Left colon (tissue), 2 donors: ENCODE measurements at regions of chr13 and their contacts with region 1.

Region 1: GRCh38 chr13:35978603-35979316 is 152.4 kb downstream of the DCLK1 start:
- DNase-seq: no peak
- ATAC-seq: no peak

Region 2: DNA sequence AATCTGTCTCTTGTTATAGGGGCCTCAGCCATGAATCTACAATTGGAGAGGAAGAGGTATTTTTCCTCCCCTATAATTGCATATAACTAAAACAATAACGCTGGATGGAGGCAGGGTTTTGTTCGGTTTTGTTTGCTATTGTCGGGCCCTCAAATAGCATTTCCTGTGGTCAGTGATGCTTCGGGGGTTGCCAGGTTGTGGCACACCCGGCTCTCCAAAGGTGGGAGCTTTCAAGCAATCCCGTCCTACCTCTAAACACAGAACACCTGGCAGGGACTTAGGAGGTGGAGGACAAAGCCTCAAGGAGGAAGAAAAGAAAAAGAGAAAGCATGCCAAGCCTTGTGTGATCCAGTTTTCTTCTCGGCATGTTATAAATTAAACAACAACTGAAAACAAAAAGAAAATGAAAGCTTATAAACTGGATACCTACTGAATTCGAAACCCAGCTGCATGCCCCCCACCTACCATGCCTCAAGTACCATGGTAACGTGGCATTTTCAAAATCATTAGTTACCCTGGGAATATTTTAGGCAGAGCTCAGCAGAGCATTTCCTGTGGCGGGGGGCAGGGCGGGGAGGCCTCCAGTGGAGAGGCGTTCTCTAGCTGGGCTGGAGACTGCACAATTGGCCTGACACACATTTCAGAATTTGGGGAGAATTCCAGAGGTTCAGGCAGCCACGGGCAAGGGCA is 61.4 kb before region 1 on chr13:
- intact Hi-C with region 1: no loop called
- DNase-seq: no peak
- ATAC-seq: no peak

Region 3: DNA sequence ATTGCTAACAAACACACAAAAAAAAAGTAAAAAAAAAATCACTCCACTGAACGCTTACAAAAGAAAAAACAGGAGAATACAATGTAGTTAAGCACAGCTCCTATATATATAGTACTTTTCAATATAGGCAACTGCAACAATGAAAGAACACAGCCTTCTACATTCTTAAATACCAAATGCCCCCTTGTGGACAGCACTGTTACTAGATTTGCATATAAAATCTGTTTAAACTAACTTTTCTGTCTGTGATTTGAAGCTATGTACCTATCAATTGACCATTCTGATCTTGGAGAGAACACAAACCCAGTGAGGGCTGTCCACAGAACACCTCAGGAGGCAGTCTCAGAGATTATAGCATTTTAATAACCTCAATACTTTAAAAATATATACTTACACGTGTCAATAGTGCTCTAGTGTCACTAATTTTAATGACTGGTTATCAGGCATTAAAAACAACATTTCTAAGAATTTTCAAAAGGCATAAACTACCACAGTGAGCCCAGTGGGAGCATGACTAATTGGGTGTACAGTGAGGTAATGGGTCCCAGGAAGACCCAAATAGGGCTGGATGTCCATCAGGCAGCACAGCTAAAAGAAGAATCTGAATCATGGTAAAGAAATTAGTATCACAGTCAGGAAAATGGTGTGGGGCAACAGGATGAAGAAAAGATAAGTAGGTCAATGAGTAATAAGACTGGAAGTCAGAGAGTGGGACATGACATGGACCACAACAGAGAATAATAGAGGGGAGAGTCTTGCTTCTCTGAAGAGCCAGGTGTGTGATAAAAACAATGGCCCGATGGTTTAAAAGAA is 296.6 kb after region 1 on chr13:
- intact Hi-C with region 1: loop called in 1 of 2 experiments (anchors 5 kb)
- DNase-seq: peak in 1 of 2 donors; percentile 11
- ATAC-seq: no peak